ENCODE measurements at regions of chr10 and their contacts with region 1.

Region 1: GRCh38 chr10:60186315-60187071 is 203.2 kb downstream of the ANK3 start:
- DNase-seq: peak in 4 of 5 donors; percentile 55 to 82 (median 74)
- ATAC-seq: peak; percentile 69 to 89 (median 88)
- H3K4me3 ChIP-seq: no peak overlapping the region
- H3K27ac ChIP-seq: peak overlapping the region in 9 of 12 donors; percentile 6 to 68 (median 36)
- H3K4me1 ChIP-seq: peaks cover 0 to 52% (median 13%) of the 10 kb centered on the region in 12 donors
- H3K27me3 ChIP-seq: no peaks in the 10 kb centered on the region
- CTCF ChIP-seq: no peak
- POLR2A ChIP-seq: no peak

Region 2: DNA sequence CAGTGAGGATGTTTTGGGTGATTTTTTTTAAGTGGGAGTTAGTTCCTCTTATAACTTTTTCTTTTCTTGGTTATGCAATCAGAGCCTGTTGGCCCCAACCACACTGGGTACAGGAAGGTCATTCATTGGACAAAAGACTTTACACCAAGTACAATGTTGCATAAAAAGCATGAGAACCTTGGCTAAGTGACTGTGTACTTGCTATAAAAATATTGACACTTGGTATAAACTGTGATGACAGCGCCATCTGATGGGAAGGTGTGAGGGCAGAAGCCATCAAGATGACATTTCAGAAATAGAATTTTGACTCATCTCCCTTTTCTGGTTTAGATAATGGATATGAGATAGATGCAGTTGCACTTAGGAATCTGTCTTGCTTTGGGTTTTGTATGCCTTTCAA is 153.8 kb before region 1 on chr10:
- intact Hi-C with region 1: no loop called
- DNase-seq: peak in 3 of 5 donors; percentile 19 to 32 (median 23)
- ATAC-seq: peak; percentile 65 to 93 (median 86)
- H3K4me3 ChIP-seq: no peak overlapping the region
- H3K27ac ChIP-seq: peak overlapping the region in 2 of 12 donors; percentile 12 to 24
- H3K4me1 ChIP-seq: peaks cover 0 to 18% (median 1%) of the 10 kb centered on the region in 12 donors
- H3K27me3 ChIP-seq: no peaks in the 10 kb centered on the region
- CTCF ChIP-seq: peak in 11 of 12 donors; percentile 8 to 67 (median 42)
- POLR2A ChIP-seq: no peak

Region 3: DNA sequence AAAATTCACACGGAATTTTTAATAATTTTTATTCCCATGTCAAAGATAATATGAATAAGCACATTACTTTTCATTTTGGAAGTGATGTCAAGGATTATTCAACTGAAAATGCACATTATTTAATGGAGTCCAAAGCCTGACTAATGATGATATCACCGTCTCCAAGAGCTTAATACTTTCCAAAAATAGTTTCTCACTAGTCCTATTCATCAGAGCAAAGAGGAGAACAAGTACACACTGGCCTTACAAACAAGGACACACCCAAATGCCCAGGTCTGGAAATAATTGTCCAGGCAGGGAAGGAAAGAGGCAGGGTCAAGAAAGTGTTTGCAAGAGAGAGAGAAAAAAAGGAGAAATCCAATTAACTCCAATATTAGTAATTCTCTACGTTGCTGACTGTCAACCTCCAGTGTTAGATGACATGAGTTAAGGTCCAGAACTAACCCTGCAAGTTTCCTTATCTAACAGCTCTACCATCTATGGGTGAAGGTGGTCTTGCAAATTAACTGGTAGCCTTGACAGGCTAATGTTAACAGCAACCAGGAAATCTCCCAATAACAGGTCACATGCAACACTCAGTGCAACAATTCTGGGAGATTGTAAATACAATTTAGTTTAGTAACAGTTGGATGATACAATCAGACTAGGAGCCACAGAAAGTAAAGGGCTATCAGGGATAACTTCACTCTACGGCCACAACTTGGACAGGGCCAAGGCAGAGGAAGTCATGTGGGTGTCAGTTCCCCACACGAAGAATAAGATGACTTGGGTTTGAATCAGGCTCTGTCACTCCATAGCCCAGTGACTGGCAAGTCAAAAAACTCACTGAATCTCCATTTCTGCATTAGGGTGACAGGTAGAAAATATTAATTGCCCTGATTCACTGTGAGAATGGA is 63.1 kb before region 1 on chr10:
- intact Hi-C with region 1: loop called in 2 of 10 experiments (anchors 10 kb)
- DNase-seq: no peak
- ATAC-seq: peak; percentile 88 to 96 (median 92)
- H3K4me3 ChIP-seq: no peak overlapping the region
- H3K27ac ChIP-seq: peak overlapping the region; percentile 30 to 73 (median 63)
- H3K4me1 ChIP-seq: peaks cover 0 to 19% (median 7%) of the 10 kb centered on the region in 12 donors
- H3K27me3 ChIP-seq: no peaks in the 10 kb centered on the region
- CTCF ChIP-seq: no peak
- POLR2A ChIP-seq: no peak

Region 4: GRCh38 chr10:60148264-60148840 is 38.1 kb before region 1 on chr10:
- intact Hi-C with region 1: loop called in 1 of 10 experiments (anchors 2 kb)
- DNase-seq: no peak
- ATAC-seq: peak in 2 of 4 donors; percentile 58 to 72
- H3K4me3 ChIP-seq: no peak overlapping the region
- H3K27ac ChIP-seq: peak overlapping the region in 7 of 12 donors; percentile 2 to 61 (median 15)
- H3K4me1 ChIP-seq: peaks cover 0 to 26% (median 14%) of the 10 kb centered on the region in 12 donors
- H3K27me3 ChIP-seq: no peaks in the 10 kb centered on the region
- CTCF ChIP-seq: no peak
- POLR2A ChIP-seq: no peak

Region 5: GRCh38 chr10:60662917-60663614 is 476.6 kb after region 1 on chr10:
- intact Hi-C with region 1: no loop called
- DNase-seq: no peak
- ATAC-seq: no peak
- H3K4me3 ChIP-seq: no peak overlapping the region
- H3K27ac ChIP-seq: no peak overlapping the region
- H3K4me1 ChIP-seq: no peaks in the 10 kb centered on the region
- H3K27me3 ChIP-seq: peaks cover 0 to 3% (median 0%) of the 10 kb centered on the region in 9 donors
- CTCF ChIP-seq: no peak
- POLR2A ChIP-seq: no peak

Measured in heart left ventricle (tissue), 16 donors.